Panc1 (cell line): ENCODE measurements at regions of chr11 and their contacts with region 1.

Region 1: GRCh38 chr11:86576946-86577624 is 95.3 kb downstream of the ME3 start:
- DNase-seq: no peak
- ATAC-seq: no peak
- H3K4me3 ChIP-seq: no peak overlapping the region
- H3K27ac ChIP-seq: peak overlapping the region; percentile 80
- H3K4me1 ChIP-seq: peaks cover 44% of the 10 kb centered on the region
- H3K27me3 ChIP-seq: no peaks in the 10 kb centered on the region
- CTCF ChIP-seq: no peak

Region 2: GRCh38 chr11:86395061-86395551 is 182.0 kb before region 1 on chr11:
- CTCF ChIA-PET with region 1: no interaction called
- POLR2A ChIA-PET with region 1: no interaction called
- in situ Hi-C with region 1: no loop called
- intact Hi-C with region 1: no loop called
- DNase-seq: no peak
- ATAC-seq: peak; percentile 81
- H3K4me3 ChIP-seq: no peak overlapping the region
- H3K27ac ChIP-seq: no peak overlapping the region
- H3K4me1 ChIP-seq: no peaks in the 10 kb centered on the region
- H3K27me3 ChIP-seq: no peaks in the 10 kb centered on the region
- CTCF ChIP-seq: no peak

Region 3: DNA sequence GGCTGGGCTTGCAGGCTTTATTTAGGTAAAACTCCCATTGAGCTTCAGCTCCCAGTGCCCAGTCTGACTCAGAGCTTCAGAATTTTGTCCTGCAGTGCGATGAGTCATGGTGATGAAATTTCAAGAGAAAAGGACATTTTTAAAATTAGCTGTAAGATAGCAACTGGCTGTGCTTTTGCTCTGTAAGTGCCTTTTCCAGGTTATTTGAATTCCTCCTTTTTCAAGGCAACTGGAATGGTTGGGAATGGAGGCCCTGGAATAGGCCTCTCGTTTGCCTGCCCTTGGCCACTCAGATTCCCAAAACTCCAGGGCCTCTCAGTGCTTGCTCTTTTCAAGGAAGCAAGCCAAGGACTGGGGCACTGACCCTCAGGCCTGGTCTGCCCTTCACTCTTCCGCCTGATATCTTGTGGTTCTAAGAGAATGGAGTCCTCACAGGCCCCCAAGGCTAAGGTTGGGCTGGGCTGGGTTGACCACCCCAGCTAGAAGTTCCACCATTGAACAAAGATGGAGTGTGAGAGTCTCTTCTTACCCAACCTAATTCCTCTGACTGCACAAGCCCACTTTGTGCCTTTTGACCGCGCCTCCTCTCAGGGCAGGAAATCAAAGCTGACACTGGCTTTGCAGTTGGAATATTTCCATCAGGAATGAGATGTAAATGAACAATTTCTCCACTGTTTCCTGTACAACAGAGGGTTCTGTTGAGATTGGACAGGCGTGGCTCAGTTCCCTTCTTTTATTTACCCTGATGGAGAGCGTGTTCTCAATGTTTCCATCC is 163.8 kb after region 1 on chr11:
- CTCF ChIA-PET with region 1: no interaction called
- POLR2A ChIA-PET with region 1: no interaction called
- in situ Hi-C with region 1: no loop called
- intact Hi-C with region 1: no loop called
- DNase-seq: peak; percentile 97
- ATAC-seq: peak; percentile 51
- H3K4me3 ChIP-seq: no peak overlapping the region
- H3K27ac ChIP-seq: peak overlapping the region; percentile 99
- H3K4me1 ChIP-seq: peaks cover 79% of the 10 kb centered on the region
- H3K27me3 ChIP-seq: no peaks in the 10 kb centered on the region
- CTCF ChIP-seq: no peak

Region 4: GRCh38 chr11:86781546-86781945 is 204.5 kb after region 1 on chr11:
- CTCF ChIA-PET with region 1: no interaction called
- POLR2A ChIA-PET with region 1: interaction called, 20 read pairs
- in situ Hi-C with region 1: no loop called
- intact Hi-C with region 1: no loop called
- DNase-seq: no peak
- ATAC-seq: no peak
- H3K4me3 ChIP-seq: no peak overlapping the region
- H3K27ac ChIP-seq: peak overlapping the region; percentile 64
- H3K4me1 ChIP-seq: peaks cover 27% of the 10 kb centered on the region
- H3K27me3 ChIP-seq: no peaks in the 10 kb centered on the region
- CTCF ChIP-seq: no peak